MCF 10A (cell line): ENCODE measurements at regions of chr1 and their contacts with region 1.

Region 1: DNA sequence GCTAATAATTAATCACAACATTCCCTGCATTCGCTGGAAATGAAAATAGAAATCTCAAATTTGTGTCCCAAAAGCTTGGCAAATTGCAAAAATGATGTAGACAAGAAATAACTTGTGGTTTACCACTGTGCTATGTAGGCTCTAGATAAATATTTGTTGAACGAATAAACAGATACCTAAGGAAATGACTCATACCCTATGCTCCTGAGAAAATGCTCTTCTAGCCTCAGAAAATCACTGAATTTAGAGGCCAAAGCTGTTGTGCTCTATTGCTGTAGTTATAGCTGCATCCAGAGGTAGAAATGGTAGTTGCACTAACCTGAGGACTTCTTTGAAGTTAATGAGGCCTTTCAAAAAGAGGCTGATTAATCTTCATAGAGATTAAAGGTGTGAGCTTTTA is 142.0 kb upstream of the ZNHIT6 start:
- DNase-seq: peak; percentile 85
- H3K4me3 Mint-ChIP-seq: peak overlapping the region; percentile 41
- H3K27ac Mint-ChIP-seq: peak overlapping the region; percentile 93
- H3K4me1 Mint-ChIP-seq: peaks cover 11% of the 10 kb centered on the region
- H3K27me3 Mint-ChIP-seq: no peaks in the 10 kb centered on the region
- CTCF ChIP-seq: no peak

Region 2: GRCh38 chr1:85398391-85399064 is 451.7 kb before region 1 on chr1:
- CTCF ChIA-PET with region 1: no interaction called
- POLR2A ChIA-PET with region 1: no interaction called
- intact Hi-C with region 1: loop called (anchors 2 kb)
- DNase-seq: peak; percentile 66
- H3K4me3 Mint-ChIP-seq: no peak overlapping the region
- H3K27ac Mint-ChIP-seq: no peak overlapping the region
- H3K4me1 Mint-ChIP-seq: peaks cover 7% of the 10 kb centered on the region
- H3K27me3 Mint-ChIP-seq: no peaks in the 10 kb centered on the region
- CTCF ChIP-seq: peak; percentile 44

Region 3: DNA sequence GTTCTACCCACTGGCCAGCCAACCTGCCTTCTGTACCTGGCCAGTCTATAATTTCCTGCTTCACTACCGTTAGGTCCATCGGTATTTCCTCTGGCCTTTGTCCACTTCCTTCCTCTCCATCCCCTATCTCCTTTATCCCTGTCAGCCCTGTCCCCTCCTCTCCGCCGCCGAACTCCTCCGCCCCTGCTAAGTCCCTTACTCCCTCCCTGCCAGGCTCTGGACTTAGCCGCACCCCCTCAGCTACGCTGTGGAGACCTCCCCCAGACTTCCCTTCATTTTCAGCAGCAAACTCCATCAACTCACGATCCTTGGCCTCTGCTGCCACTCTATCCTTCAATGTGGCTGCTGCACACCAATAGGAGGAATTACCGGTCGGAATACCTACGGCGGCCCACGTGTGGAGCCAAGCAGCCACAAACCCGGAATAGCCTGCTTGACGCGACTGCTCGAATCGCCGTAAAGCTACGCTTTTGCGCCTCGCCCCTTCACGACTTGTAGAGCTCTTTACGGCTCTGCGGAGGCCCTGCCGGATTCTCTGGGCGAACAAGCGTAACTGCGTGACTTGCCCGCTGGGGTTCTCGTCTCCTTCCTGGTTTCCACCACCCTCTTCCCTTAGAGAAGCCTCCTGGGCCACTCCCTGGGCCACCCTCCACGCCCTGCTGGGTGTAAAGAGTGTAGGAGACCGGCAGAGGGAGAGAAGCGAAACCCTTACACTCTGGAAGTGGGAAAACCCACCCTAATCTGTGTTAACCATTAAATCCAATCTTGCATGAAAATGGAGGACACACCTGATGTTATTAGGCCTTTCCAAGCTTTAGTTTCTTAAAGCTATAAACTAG is 142.0 kb before region 1 on chr1 and contains the start of gene ZNHIT6:
- CTCF ChIA-PET with region 1: interaction called, 3 read pairs
- POLR2A ChIA-PET with region 1: interaction called, 9 read pairs
- intact Hi-C with region 1: loop called (anchors 1 kb)
- DNase-seq: peak; percentile 96
- H3K4me3 Mint-ChIP-seq: no peak within 1 kb of the TSS
- H3K27ac Mint-ChIP-seq: no peak within 1 kb of the TSS
- H3K4me1 Mint-ChIP-seq: peaks cover 13% of the 10 kb centered on the region
- H3K27me3 Mint-ChIP-seq: no peaks in the 10 kb centered on the region
- CTCF ChIP-seq: peak; percentile 32
- total RNA-seq, gene ZNHIT6: 24.7 and 31.3 TPM in 2 replicates

Region 4: DNA sequence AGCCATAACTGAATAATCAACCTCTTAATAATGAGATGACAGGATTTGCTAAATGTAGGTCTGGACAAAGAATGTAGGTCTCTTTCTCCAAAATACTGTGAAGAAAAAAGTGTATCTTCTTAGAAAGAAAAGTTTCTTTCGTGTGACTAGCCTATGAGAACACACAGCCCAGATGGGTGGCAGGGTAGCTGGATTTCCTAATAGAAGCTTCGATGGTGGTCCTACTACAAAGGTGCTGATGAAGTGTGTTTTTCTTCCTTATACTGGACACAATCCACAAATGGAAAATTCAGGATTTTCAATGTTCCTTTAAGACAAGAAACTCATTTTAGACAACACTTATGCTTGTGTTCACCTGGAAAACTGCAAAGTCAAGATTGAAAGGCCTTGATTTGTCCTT is 51.8 kb before region 1 on chr1:
- CTCF ChIA-PET with region 1: no interaction called
- POLR2A ChIA-PET with region 1: no interaction called
- intact Hi-C with region 1: no loop called
- DNase-seq: no peak
- H3K4me3 Mint-ChIP-seq: no peak overlapping the region
- H3K27ac Mint-ChIP-seq: no peak overlapping the region
- H3K4me1 Mint-ChIP-seq: peaks cover 15% of the 10 kb centered on the region
- H3K27me3 Mint-ChIP-seq: no peaks in the 10 kb centered on the region
- CTCF ChIP-seq: no peak

Region 5: GRCh38 chr1:86018283-86018923 is 168.2 kb after region 1 on chr1:
- CTCF ChIA-PET with region 1: no interaction called
- POLR2A ChIA-PET with region 1: no interaction called
- intact Hi-C with region 1: no loop called
- DNase-seq: peak; percentile 56
- H3K4me3 Mint-ChIP-seq: no peak overlapping the region
- H3K27ac Mint-ChIP-seq: no peak overlapping the region
- H3K4me1 Mint-ChIP-seq: no peaks in the 10 kb centered on the region
- H3K27me3 Mint-ChIP-seq: peaks cover 9% of the 10 kb centered on the region
- CTCF ChIP-seq: peak; percentile 69